MCF 10A (cell line): ENCODE measurements at regions of chr6 and their contacts with region 1.

Region 1: DNA sequence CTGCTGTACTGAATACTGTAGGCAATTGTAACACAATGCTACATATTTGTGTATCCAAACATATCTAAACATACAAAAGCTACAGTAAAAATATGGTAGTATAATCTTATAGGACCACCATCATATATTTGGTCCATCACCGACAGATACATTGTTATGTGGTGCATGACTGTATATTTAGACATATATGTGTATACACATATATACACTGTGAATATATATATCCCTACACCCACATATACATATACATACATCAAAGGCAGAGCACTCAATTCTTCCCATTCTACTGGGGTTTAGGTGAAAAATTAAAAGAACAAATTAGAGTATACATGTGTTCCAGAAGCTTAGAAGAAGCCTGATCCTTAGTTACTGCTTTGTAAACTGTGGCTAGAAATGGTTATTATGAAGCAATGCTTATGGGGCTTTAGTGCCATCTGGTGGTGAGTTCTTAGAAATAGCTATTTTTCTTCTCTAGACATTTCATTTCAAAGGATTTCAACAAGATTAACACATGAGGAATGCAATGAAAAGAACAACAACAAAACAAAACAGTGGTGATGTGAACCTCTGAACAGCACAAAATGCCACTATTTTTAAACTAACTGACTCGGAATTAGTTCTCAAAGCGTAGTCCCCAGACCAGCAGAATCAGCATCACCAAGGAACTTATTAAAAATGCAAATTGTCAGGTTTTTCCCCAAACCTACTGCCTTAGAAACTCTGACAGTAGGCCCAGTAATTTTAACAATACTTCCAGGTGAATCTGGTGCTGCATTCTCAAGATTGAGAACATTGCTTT is 38.0 kb downstream of the PKHD1 start:
- DNase-seq: peak; percentile 50
- H3K4me3 Mint-ChIP-seq: no peak overlapping the region
- H3K27ac Mint-ChIP-seq: no peak overlapping the region
- H3K4me1 Mint-ChIP-seq: peaks cover 9% of the 10 kb centered on the region
- H3K27me3 Mint-ChIP-seq: peaks cover 40% of the 10 kb centered on the region
- CTCF ChIP-seq: peak; percentile 49

Region 2: DNA sequence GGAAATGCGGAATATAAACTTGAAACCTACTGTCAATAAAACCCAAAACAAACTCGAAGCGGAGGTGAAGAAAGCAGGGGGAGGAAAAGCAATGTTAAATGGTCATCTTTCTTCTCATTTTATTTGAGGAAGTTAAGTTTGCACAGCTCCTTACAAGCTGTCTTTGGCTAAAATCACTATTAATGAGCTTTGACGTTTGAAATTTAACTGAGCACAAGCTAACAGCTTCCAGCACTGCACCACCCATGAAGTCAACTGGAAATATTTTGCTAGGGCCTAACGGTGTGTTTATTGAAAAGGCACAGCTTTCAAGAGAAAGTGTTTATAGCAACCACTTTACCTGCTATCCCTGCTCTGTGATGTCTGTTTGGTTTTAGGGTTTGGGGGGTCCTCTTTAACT is 65.9 kb before region 1 on chr6:
- CTCF ChIA-PET with region 1: no interaction called
- POLR2A ChIA-PET with region 1: no interaction called
- intact Hi-C with region 1: no loop called
- DNase-seq: no peak
- H3K4me3 Mint-ChIP-seq: no peak overlapping the region
- H3K27ac Mint-ChIP-seq: no peak overlapping the region
- H3K4me1 Mint-ChIP-seq: no peaks in the 10 kb centered on the region
- H3K27me3 Mint-ChIP-seq: peaks cover 23% of the 10 kb centered on the region
- CTCF ChIP-seq: no peak

Region 3: DNA sequence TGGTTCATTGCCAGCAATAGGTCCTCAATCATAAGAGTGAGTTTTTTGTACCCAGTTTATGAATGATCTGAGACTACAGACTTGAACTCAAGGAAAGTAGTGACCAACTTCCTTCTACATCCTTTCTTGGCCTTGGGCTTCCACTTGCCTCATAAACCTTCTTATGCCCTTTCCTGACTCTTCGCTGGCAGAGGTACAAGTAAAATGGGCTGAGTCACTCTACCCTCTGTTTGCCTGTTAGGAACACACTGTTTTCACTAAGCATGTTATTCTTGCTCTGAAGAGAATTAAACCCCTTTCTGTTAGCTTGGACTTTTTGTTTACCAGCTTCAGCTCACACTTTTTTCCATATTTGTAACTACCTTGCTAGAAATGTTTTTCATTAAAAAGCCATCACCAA is 36.4 kb before region 1 on chr6:
- CTCF ChIA-PET with region 1: interaction called, 12 read pairs
- POLR2A ChIA-PET with region 1: no interaction called
- intact Hi-C with region 1: no loop called
- DNase-seq: peak; percentile 68
- H3K4me3 Mint-ChIP-seq: no peak overlapping the region
- H3K27ac Mint-ChIP-seq: no peak overlapping the region
- H3K4me1 Mint-ChIP-seq: peaks cover 6% of the 10 kb centered on the region
- H3K27me3 Mint-ChIP-seq: no peaks in the 10 kb centered on the region
- CTCF ChIP-seq: no peak

Region 4: GRCh38 chr6:52020945-52021570 is 28.4 kb before region 1 on chr6:
- CTCF ChIA-PET with region 1: interaction called, 16 read pairs
- POLR2A ChIA-PET with region 1: no interaction called
- intact Hi-C with region 1: no loop called
- DNase-seq: peak; percentile 45
- H3K4me3 Mint-ChIP-seq: no peak overlapping the region
- H3K27ac Mint-ChIP-seq: no peak overlapping the region
- H3K4me1 Mint-ChIP-seq: no peaks in the 10 kb centered on the region
- H3K27me3 Mint-ChIP-seq: peaks cover 20% of the 10 kb centered on the region
- CTCF ChIP-seq: peak; percentile 53

Region 5: DNA sequence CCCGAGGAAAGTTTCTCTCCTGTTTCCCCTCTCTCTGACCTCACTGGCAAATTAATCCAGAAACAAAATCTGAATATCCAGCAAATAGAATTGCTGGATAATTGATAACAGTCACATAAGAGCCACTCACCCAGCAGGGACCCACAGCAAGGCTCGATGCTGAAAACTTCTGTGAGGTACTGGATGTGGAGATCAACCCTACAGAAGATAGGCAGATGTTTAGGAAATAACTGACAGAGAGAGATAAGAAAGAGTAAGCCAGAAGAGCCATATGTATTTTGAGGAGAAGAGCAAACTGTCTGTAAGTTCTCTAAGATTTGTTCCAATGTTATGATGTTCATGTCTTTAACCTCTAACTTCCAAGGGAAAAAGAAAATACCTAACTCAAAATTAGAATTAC is 21.8 kb before region 1 on chr6:
- CTCF ChIA-PET with region 1: interaction called, 16 read pairs
- POLR2A ChIA-PET with region 1: no interaction called
- intact Hi-C with region 1: no loop called
- DNase-seq: no peak
- H3K4me3 Mint-ChIP-seq: no peak overlapping the region
- H3K27ac Mint-ChIP-seq: no peak overlapping the region
- H3K4me1 Mint-ChIP-seq: no peaks in the 10 kb centered on the region
- H3K27me3 Mint-ChIP-seq: peaks cover 31% of the 10 kb centered on the region
- CTCF ChIP-seq: no peak

Region 6: GRCh38 chr6:52063584-52064344 is 14.3 kb after region 1 on chr6:
- CTCF ChIA-PET with region 1: interaction called, 39 read pairs
- POLR2A ChIA-PET with region 1: interaction called, 3 read pairs
- intact Hi-C with region 1: no loop called
- DNase-seq: peak; percentile 40
- H3K4me3 Mint-ChIP-seq: no peak overlapping the region
- H3K27ac Mint-ChIP-seq: no peak overlapping the region
- H3K4me1 Mint-ChIP-seq: peaks cover 17% of the 10 kb centered on the region
- H3K27me3 Mint-ChIP-seq: no peaks in the 10 kb centered on the region
- CTCF ChIP-seq: no peak

Region 7: DNA sequence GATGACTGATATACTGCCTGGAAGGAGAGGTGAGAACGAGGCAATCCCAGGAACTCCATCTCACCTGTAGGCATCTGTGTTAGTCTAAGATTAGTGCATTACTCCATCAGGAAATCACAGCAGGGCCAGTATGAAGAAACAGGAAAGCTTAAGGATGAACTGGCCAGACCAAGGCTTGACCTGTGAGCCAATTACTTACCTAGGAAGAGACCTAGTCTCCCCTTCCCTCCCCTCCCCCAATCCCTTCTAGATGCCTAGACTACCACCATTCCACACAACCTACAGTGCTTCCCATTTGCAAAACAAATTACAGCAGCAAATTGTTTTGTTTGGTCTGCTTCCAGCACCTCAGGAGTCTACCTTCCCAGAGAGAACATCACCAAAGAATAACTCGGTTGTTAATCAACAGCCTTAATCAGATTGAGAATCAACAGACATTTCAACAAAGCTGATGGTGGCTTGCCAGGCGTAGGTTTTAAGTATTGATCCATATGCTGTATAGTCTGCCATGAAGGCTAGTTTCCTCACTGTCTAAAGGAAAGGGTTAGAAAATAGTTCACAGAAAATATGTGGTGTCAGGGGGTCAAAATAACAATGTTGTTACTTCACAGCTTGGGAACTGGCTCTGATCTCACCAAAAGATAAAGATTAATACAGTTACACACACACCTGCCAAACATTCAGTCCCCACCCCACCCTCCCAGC is 27.9 kb after region 1 on chr6:
- CTCF ChIA-PET with region 1: interaction called, 19 read pairs
- POLR2A ChIA-PET with region 1: no interaction called
- intact Hi-C with region 1: no loop called
- DNase-seq: peak; percentile 4
- H3K4me3 Mint-ChIP-seq: no peak overlapping the region
- H3K27ac Mint-ChIP-seq: no peak overlapping the region
- H3K4me1 Mint-ChIP-seq: peaks cover 13% of the 10 kb centered on the region
- H3K27me3 Mint-ChIP-seq: no peaks in the 10 kb centered on the region
- CTCF ChIP-seq: no peak

Region 8: DNA sequence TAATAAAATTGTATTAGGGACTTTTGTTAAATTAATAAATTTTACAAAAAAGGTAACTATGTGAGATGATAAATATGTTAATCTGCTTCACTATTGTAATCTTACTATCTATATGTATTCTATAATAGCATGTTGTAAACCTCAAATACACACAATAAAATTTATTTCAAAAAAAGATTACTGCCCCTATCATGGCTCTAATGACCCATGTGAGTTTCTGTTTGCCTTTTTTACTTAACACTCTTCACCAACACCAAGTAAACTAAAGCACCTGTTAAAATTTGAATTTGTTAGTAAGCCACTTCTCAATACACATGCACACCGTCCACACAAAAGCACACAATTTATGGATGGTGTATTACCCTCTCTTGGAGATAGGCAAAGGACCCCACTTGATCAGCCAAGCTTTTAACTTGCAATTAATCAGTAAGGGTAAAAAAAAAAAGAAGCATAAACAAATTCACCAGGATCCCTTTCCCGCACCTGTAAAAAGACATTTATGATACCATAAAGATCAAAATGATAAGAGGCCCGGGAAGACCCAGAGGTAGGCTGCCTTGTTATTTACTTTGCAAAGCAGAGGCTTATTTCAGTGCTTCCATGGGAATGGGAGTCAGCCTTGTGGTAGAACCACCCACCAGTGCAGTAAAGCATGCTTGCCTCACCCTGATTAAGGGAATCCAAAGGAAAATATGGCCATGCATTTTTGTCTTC is 66.6 kb after region 1 on chr6:
- CTCF ChIA-PET with region 1: no interaction called
- POLR2A ChIA-PET with region 1: no interaction called
- intact Hi-C with region 1: no loop called
- DNase-seq: no peak
- H3K4me3 Mint-ChIP-seq: no peak overlapping the region
- H3K27ac Mint-ChIP-seq: no peak overlapping the region
- H3K4me1 Mint-ChIP-seq: no peaks in the 10 kb centered on the region
- H3K27me3 Mint-ChIP-seq: no peaks in the 10 kb centered on the region
- CTCF ChIP-seq: no peak